CD8-positive, alpha-beta memory T cell (primary cell): ENCODE measurements at regions of chr7 and their contacts with region 1.

Region 1: DNA sequence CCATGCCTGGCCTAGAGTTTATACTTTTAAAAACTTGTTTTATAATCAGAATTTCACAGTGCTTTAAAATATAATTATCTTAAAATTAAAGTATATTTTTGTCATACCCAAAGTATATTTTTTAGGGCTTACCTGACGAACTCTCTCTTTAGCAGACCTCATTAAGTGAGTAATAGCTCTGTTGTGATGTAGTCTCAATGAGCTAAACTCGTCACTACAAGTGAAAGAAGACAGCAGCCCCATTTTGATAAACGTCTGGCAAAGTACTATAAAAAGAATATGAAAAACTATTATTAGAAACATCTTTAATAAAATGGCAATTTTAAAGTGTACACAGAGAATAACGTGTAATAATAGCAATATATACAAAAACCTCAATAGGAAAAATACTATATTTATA is 18.6 kb downstream of the ANKRD61 start:
- DNase-seq: no peak
- H3K4me3 ChIP-seq: no peak overlapping the region
- H3K4me3 Mint-ChIP-seq: no peak overlapping the region
- H3K27ac ChIP-seq: no peak overlapping the region
- H3K27ac Mint-ChIP-seq: no peak overlapping the region
- H3K4me1 ChIP-seq: no peaks in the 10 kb centered on the region
- H3K4me1 Mint-ChIP-seq: peaks cover 0 to 5% (median 2%) of the 10 kb centered on the region in 3 donors
- H3K27me3 ChIP-seq: no peaks in the 10 kb centered on the region
- H3K27me3 Mint-ChIP-seq: no peaks in the 10 kb centered on the region

Region 2: DNA sequence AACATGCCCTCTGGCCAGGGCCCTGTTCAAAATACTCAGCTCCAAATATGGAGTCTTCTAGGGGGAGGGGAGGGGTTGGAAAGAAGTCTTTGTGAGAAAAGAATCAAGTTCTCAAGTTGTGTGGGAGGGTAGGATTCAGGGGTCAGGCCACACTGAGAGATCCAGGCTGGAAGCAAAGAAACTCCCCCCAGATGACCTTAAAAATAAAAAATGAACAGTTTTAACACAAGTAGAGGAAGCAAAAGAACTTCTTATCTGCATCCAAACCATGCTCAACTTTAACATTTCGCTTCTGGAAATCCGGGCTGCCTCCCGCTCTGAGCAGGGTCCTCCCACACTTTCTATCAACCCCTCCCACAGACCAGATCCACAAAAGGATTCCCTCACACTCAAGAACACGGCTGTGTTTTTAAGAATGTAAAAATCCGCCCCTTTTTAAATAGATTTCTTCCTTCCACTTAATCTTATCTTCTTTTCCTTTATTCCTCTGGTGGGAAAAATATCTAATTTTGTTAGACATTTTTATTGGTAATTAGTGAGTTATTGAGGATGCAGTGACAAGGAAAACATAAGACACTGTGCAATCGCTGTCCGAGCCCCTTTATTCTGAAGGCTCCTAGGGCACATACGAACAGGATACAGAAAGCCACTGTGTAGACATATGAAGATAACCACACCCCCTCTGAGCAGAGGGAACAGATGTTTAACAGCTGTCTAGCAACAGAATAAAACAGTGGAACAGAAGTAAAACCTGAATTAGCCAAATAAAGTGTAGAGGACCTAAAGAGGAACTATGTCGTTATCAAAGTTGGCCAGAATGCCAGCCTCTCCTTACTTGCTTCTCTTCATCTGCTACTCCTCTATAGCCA is 178.8 kb after region 1 on chr7:
- CTCF ChIA-PET with region 1: no interaction called
- POLR2A ChIA-PET with region 1: no interaction called
- DNase-seq: no peak
- H3K4me3 ChIP-seq: no peak overlapping the region
- H3K4me3 Mint-ChIP-seq: peak overlapping the region in 2 of 7 donors; percentile 30 to 59
- H3K27ac ChIP-seq: peak overlapping the region; percentile 35
- H3K27ac Mint-ChIP-seq: peak overlapping the region in 7 of 8 donors; percentile 15 to 80 (median 44)
- H3K4me1 ChIP-seq: peaks cover 17% of the 10 kb centered on the region
- H3K4me1 Mint-ChIP-seq: peaks cover 44 to 73% (median 62%) of the 10 kb centered on the region in 3 donors
- H3K27me3 ChIP-seq: no peaks in the 10 kb centered on the region
- H3K27me3 Mint-ChIP-seq: peaks cover 0 to 3% of the 10 kb centered on the region in 2 donors

Region 3: GRCh38 chr7:6489612-6490011 is 439.8 kb after region 1 on chr7:
- CTCF ChIA-PET with region 1: no interaction called
- POLR2A ChIA-PET with region 1: interaction called, 10 read pairs
- DNase-seq: no peak
- H3K4me3 ChIP-seq: no peak overlapping the region
- H3K4me3 Mint-ChIP-seq: no peak overlapping the region
- H3K27ac ChIP-seq: no peak overlapping the region
- H3K27ac Mint-ChIP-seq: peak overlapping the region in 1 of 8 donors; percentile 23
- H3K4me1 ChIP-seq: peaks cover 3% of the 10 kb centered on the region
- H3K4me1 Mint-ChIP-seq: peaks cover under 1 to 5% (median 2%) of the 10 kb centered on the region in 3 donors
- H3K27me3 ChIP-seq: no peaks in the 10 kb centered on the region
- H3K27me3 Mint-ChIP-seq: peaks cover 3 to 7% of the 10 kb centered on the region in 2 donors